Naive thymus-derived CD8-positive, alpha-beta T cell (primary cell): ENCODE measurements at regions of chr2 and their contacts with region 1.

Region 1: GRCh38 chr2:216081487-216082116 is at the starts of genes PECR and TMEM169:
- DNase-seq: peak; percentile 37 to 82 (median 66)
- ATAC-seq: peak; percentile 80 to 86
- H3K4me3 Mint-ChIP-seq: peak within 1 kb of the TSS; percentile 86 to 99 (median 93)
- H3K27ac Mint-ChIP-seq: peak within 1 kb of the TSS; percentile 86 to 98 (median 94)
- H3K4me1 Mint-ChIP-seq: peaks cover 24 to 70% (median 60%) of the 10 kb centered on the region in 4 donors
- H3K27me3 Mint-ChIP-seq: no peaks in the 10 kb centered on the region
- polyA plus RNA-seq, gene PECR: 25.4 to 33.3 (median 28.6) TPM
- polyA plus RNA-seq, gene TMEM169: 0.73 to 2.0 (median 1.8) TPM

Region 2: GRCh38 chr2:216057688-216058193 is 23.9 kb before region 1 on chr2:
- POLR2A ChIA-PET with region 1: interaction called, 12 read pairs
- DNase-seq: peak; percentile 28 to 83 (median 65)
- ATAC-seq: peak; percentile 99
- H3K4me3 Mint-ChIP-seq: peak overlapping the region; percentile 72 to 90 (median 83)
- H3K27ac Mint-ChIP-seq: peak overlapping the region; percentile 94 to 100 (median 99)
- H3K4me1 Mint-ChIP-seq: peaks cover 10 to 40% (median 21%) of the 10 kb centered on the region in 4 donors
- H3K27me3 Mint-ChIP-seq: no peaks in the 10 kb centered on the region

Region 3: GRCh38 chr2:216114714-216115557 is 33.3 kb after region 1 on chr2:
- POLR2A ChIA-PET with region 1: interaction called, 96 read pairs
- DNase-seq: peak; percentile 87 to 99 (median 97)
- ATAC-seq: peak; percentile 91 to 93
- H3K4me3 Mint-ChIP-seq: peak overlapping the region; percentile 90 to 98 (median 92)
- H3K27ac Mint-ChIP-seq: peak overlapping the region; percentile 95 to 99 (median 97)
- H3K4me1 Mint-ChIP-seq: peaks cover 42 to 100% (median 95%) of the 10 kb centered on the region in 4 donors
- H3K27me3 Mint-ChIP-seq: peaks cover 0 to 2% (median 0%) of the 10 kb centered on the region in 5 donors